ENCODE measurements at regions of chr2 and their contacts with region 1.

Region 1: DNA sequence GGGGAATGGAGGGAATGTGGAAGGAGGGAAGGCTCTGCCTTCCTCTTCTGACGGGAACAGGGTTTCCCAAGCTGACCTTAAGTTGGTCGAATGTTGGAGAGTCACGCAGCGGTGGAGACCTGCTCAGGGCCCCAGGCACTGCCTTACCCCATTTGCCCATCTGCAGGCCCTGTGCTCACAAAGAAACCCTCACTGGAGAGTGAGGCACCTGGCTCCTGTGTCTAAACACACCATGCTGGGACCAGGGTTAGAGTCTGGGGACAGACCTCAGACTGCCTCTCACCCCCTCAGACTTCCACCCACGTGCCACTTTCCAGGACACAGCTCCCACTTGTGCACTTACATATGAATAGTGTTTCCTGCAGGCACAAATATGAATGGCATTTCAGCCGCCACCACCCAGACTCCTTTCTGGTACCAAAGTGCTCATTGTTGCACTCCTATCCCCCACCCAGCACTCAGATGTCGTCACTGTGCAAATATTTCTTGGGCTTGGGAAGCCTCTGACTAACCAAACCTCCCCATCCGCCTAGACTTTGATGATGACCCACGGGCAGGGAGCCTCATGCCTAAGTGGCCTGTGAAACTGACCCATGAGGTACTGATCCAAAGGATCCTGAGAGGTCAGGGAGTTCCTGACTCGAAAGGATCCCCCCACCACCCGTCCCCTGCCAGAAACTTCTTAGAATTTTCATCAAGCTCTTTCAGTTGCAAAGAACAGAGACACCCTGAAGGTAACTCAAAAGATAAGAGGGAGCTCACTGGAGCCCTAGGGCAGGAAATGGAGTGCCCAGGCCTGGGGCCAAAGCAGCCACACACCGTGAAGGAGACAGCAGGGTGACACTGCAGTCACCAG is 78.3 kb downstream of the STPG4 start:
- DNase-seq: peak; percentile 99
- ATAC-seq: peak; percentile 95
- H3K4me3 ChIP-seq: no peak overlapping the region
- H3K27ac ChIP-seq: peak overlapping the region; percentile 86
- H3K4me1 ChIP-seq: peaks cover 43% of the 10 kb centered on the region
- H3K27me3 ChIP-seq: no peaks in the 10 kb centered on the region
- CTCF ChIP-seq: no peak

Region 2: GRCh38 chr2:46781468-46782189 is 295.2 kb before region 1 on chr2:
- CTCF ChIA-PET with region 1: no interaction called
- POLR2A ChIA-PET with region 1: no interaction called
- intact Hi-C with region 1: no loop called
- DNase-seq: no peak
- ATAC-seq: no peak
- H3K4me3 ChIP-seq: no peak overlapping the region
- H3K27ac ChIP-seq: no peak overlapping the region
- H3K4me1 ChIP-seq: peaks cover 29% of the 10 kb centered on the region
- H3K27me3 ChIP-seq: no peaks in the 10 kb centered on the region
- CTCF ChIP-seq: no peak

Region 3: GRCh38 chr2:47016172-47016913 is 60.5 kb before region 1 on chr2:
- CTCF ChIA-PET with region 1: no interaction called
- POLR2A ChIA-PET with region 1: no interaction called
- intact Hi-C with region 1: loop called (anchors 1 kb)
- DNase-seq: peak; percentile 95
- ATAC-seq: peak; percentile 97
- H3K4me3 ChIP-seq: no peak overlapping the region
- H3K27ac ChIP-seq: peak overlapping the region; percentile 61
- H3K4me1 ChIP-seq: peaks cover 27% of the 10 kb centered on the region
- H3K27me3 ChIP-seq: no peaks in the 10 kb centered on the region
- CTCF ChIP-seq: peak; percentile 46

Region 4: GRCh38 chr2:47043142-47043890 is 33.5 kb before region 1 on chr2:
- CTCF ChIA-PET with region 1: no interaction called
- POLR2A ChIA-PET with region 1: interaction called, 5 read pairs
- intact Hi-C with region 1: loop called (anchors 2 kb)
- DNase-seq: peak; percentile 98
- ATAC-seq: peak; percentile 93
- H3K4me3 ChIP-seq: peak overlapping the region; percentile 59
- H3K27ac ChIP-seq: peak overlapping the region; percentile 98
- H3K4me1 ChIP-seq: peaks cover 40% of the 10 kb centered on the region
- H3K27me3 ChIP-seq: no peaks in the 10 kb centered on the region
- CTCF ChIP-seq: peak; percentile 13; the same call in 1 of the 2 replicates

Region 5: DNA sequence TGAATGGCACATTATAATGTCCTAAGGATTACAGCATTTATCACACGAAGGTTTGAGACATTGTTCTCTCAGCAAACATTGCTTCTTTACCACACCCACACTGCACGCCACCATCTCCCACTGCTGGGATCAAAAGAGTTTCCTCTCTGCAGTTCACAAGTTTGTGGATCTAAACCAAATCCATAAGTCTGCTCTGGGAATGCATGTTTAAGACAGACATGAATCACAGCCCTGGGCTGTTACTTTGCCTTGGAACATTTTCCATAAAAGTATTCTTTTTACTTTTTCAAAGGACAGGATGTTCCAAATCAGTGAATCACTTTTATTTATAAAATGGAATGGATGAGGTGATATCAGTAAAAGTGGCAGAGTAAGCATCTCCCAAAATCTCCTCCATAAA is 42.2 kb after region 1 on chr2:
- CTCF ChIA-PET with region 1: no interaction called
- POLR2A ChIA-PET with region 1: no interaction called
- intact Hi-C with region 1: loop called (anchors 2 kb)
- DNase-seq: peak; percentile 78
- ATAC-seq: peak; percentile 79
- H3K4me3 ChIP-seq: no peak overlapping the region
- H3K27ac ChIP-seq: peak overlapping the region; percentile 65
- H3K4me1 ChIP-seq: peaks cover 34% of the 10 kb centered on the region
- H3K27me3 ChIP-seq: no peaks in the 10 kb centered on the region
- CTCF ChIP-seq: no peak

Region 6: DNA sequence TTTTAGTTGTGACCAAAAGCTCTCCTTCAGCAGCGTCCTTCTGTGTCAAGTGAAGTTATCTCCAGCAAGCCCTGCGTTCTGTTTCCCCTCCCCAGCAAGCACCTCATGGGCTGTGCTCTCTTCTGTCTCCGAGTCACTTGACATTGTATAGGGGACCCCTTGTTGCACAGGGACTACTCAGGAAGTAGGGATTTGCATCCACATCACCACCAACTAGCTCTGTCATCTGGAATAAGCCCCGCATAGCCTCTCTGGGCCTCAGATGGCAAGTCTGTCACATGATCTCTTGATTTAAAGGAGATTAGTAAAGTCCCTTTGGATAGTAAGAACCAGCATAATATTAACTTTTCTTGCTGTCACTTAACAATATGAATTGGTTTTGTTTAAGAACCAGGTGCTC is 110.3 kb after region 1 on chr2:
- CTCF ChIA-PET with region 1: no interaction called
- POLR2A ChIA-PET with region 1: no interaction called
- intact Hi-C with region 1: no loop called
- DNase-seq: no peak
- ATAC-seq: no peak
- H3K4me3 ChIP-seq: no peak overlapping the region
- H3K27ac ChIP-seq: no peak overlapping the region
- H3K4me1 ChIP-seq: peaks cover 31% of the 10 kb centered on the region
- H3K27me3 ChIP-seq: no peaks in the 10 kb centered on the region
- CTCF ChIP-seq: no peak

Measured in PC-3 (cell line).